Dendritic cell treated with granulocyte-macrophage colony-stimulating factor and Interleukin-4, amounts not matched to agents 40 ng/mL and 50 ng/mL, for 4 days (primary cell): ENCODE measurements at regions of chr20 and their contacts with region 1.

Region 1: DNA sequence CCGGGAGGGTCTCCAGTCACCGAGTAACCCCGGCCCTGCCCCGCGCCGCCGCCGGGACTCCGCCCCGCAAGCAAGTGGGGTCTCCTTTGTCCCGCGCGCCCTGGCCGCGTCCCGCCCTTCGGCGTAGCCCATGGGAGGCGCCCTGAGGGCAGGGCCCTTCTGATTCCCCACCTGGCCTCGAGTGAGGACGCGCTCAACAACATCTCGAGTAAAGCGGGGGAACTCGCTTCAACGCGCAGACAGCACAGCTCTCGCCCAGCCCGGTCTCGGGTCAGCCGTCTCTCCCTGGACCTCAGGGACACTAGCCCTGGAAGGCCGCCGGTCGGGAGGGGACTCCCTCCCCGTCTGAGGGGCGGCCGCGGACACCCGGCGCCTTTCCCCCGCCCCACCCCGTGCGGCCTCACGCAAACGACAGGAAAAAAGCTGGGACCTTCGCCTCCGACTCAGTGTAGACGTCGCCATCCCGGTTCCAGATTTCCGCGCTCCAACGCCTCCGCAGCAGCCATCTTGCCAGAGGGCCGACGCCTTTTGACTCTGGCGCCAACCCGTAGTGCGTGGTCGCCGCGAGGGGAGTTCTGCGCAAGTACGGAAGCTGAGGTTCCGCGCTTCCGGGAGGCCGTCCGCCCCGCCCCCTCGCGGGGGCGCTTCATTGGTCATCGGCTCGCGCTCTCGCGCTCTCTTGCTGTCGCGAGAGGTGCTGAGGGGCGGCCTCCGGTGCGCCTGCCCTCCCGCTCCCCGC is 412 bp upstream of the GID8 start:
- H3K4me3 Mint-ChIP-seq: peak overlapping the region; percentile 96
- H3K27ac Mint-ChIP-seq: peak overlapping the region; percentile 91
- H3K4me1 Mint-ChIP-seq: peaks cover 43% of the 10 kb centered on the region
- H3K27me3 Mint-ChIP-seq: no peaks in the 10 kb centered on the region

Region 2: DNA sequence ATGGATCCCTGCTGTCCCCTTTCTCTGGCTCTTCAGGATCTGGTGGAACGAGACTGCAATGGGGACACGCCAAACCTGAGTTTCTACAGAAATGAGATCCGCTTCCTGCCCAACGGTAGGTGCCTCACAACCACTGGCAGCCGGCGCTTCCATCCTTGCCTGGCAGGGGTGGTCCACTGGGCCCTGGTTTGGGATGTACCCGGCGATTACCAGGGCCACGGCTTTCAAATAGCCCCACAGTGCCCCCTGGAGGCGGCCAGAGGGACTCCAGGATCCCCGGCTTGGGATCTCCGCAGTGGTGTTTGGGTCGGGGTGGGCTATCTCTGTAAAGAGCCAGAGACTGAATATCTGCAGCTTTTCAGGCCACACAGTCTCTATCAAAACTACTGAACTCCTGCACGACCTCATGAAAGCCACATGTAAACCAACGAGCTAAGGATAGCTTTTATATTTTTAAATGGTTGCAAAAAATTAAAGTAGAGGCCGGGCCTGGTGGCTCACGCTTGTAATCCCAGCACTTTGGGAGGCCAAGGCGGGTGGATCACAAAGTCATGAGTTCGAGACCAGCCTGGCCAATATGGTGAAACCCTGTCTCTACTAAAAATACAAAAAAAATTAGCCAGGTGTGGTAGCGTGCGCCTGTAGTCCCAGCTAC is 129.2 kb before region 1 on chr20:
- intact Hi-C with region 1: no loop called
- H3K4me3 Mint-ChIP-seq: no peak overlapping the region
- H3K27ac Mint-ChIP-seq: no peak overlapping the region
- H3K4me1 Mint-ChIP-seq: peaks cover 75% of the 10 kb centered on the region
- H3K27me3 Mint-ChIP-seq: peaks cover 13% of the 10 kb centered on the region

Region 3: DNA sequence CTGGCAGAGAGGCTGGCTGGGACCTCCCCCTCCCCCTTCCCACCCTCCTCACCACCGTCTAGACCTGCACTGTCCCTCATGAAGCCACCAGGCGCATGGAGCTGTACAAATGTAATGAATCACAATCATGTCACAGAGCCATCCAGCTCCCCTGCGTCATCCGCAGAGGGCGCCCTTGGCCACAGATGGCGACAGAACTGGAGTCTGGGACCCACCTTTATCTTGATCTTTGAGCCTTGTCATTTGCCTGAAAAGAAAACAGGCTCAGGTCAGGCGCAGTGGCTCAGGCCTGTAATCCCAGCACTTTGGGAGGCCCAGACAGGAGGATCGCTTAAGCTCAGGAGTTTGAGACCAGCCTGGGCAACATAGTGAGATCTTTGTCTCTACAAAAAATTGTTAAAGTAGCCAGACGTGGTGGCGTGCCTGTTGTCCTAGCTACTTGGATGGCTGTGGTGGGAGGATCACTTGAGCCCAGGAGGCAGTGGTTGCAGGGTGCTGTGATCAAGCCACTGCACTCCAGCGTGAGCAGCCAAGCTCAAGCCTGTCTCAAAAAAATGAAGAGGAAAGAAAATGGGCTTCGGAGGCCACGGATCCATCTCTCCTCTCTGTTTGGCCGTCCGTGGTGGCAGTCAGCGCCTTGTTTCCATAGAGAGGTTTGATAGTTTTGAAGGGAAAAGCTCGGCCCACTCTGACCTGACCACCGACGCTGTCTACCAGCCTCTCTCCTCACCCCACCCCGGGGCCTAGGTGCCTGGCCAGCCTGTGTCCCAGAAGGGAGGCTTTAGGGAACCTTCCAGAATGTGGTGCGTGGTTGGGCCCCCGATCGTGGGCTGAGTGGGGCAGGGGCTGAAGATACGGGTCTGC is 114.5 kb before region 1 on chr20:
- intact Hi-C with region 1: no loop called
- H3K4me3 Mint-ChIP-seq: no peak overlapping the region
- H3K27ac Mint-ChIP-seq: no peak overlapping the region
- H3K4me1 Mint-ChIP-seq: peaks cover 5% of the 10 kb centered on the region
- H3K27me3 Mint-ChIP-seq: peaks cover 33% of the 10 kb centered on the region

Region 4: GRCh38 chr20:62900052-62900691 is 37.4 kb before region 1 on chr20:
- intact Hi-C with region 1: loop called (anchors 5 kb)
- H3K4me3 Mint-ChIP-seq: no peak overlapping the region
- H3K27ac Mint-ChIP-seq: no peak overlapping the region
- H3K4me1 Mint-ChIP-seq: peaks cover 15% of the 10 kb centered on the region
- H3K27me3 Mint-ChIP-seq: no peaks in the 10 kb centered on the region

Region 5: DNA sequence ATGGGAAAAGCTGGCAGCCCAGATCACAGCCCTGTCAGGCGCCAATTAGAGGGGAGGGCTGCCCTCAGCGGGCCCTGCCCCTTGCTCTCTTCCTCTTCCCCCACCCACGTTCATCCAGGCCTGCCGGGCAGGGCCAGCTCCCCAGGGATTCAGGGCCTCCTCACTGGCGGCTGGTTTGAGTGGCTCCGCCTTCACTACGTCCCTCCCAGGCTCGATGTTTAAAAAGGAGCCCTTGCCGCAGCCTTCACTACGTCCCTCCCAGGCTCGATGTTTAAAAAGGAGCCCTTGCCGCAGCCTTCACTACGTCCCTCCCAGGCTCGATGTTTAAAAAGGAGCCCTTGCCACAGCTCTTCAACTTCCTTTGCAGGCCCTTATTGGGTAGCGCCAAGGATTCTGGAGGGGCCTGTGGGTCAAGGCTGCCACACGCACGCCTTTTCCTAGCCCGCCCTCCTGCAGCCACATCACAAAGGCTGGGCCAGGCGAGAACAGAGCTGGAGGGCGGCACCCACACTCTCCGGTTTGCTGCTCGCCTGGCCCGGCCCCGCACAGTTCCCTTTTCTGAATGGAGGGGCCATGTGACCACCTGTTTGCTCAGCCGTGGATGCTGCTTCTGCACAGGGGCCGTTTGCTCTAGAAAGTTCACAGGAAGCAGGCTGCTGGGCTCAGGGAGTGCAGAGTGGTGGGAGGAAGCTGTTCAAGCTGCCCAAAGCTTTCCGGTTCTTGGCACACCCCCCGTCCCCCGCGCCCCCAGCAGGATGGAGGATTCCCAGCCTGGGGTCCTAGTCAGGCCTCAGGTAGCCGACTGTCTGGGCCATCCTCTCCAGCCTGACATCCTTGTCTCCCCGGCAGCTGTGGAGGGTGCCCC is 16.5 kb after region 1 on chr20:
- intact Hi-C with region 1: loop called (anchors 2 kb)
- H3K4me3 Mint-ChIP-seq: peak overlapping the region; percentile 73
- H3K27ac Mint-ChIP-seq: peak overlapping the region; percentile 88
- H3K4me1 Mint-ChIP-seq: peaks cover 86% of the 10 kb centered on the region
- H3K27me3 Mint-ChIP-seq: no peaks in the 10 kb centered on the region